ENCODE measurements at regions of chr21 and their contacts with region 1.

Region 1: DNA sequence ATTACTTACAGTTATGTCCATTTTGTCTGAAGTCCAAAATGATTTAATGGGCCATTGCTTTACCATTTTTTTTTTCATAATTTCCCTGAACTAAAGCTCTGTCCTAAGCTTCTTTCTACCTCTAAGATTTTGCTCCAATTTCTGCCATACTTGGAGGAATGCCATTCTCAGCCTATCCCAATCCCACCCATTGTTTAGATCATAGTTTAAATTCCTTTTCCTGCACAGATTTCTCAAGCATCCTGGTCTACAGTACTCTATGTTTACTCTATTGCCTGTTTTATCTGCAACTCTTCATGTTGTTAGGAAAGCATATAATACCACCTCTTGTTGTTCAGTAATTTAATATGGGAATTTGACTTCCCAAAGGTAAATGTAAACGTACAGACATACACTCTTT is 30.8 kb downstream of the ADAMTS1 start:
- DNase-seq: no peak
- H3K4me3 ChIP-seq: no peak overlapping the region
- H3K27ac ChIP-seq: no peak overlapping the region
- H3K4me1 ChIP-seq: no peaks in the 10 kb centered on the region
- H3K27me3 ChIP-seq: no peaks in the 10 kb centered on the region
- CTCF ChIP-seq: no peak
- EP300 ChIP-seq: no peak
- RAD21 ChIP-seq: no peak

Region 2: DNA sequence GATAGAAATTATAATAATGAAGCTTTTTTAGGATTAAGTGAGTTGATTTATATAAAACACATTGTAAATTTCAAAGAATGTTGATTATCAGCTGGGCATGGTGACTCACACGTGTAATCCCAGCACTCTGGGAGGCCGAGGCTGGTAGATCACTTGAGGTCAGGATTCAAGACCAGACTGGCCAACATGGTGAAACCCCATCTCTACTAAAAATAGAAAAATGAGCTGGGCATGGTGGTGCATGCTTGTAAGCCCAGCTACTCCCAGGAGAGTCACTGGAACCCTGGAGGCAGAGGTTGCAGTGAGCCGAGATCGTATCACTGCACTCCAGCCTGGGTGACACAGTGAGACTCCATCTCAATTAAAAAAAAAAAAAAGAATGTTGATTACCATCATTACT is 12.4 kb after region 1 on chr21:
- CTCF ChIA-PET with region 1: interaction called, 27 read pairs
- POLR2A ChIA-PET with region 1: no interaction called
- DNase-seq: no peak
- H3K4me3 ChIP-seq: no peak overlapping the region; a peak in 1 of 4 replicates
- H3K27ac ChIP-seq: no peak overlapping the region
- H3K4me1 ChIP-seq: no peaks in the 10 kb centered on the region
- H3K27me3 ChIP-seq: no peaks in the 10 kb centered on the region
- CTCF ChIP-seq: no peak
- EP300 ChIP-seq: no peak
- RAD21 ChIP-seq: no peak

Region 3: GRCh38 chr21:26834181-26834945 is 20.0 kb after region 1 on chr21:
- CTCF ChIA-PET with region 1: interaction called, 14 read pairs
- POLR2A ChIA-PET with region 1: no interaction called
- DNase-seq: no peak
- H3K4me3 ChIP-seq: no peak overlapping the region
- H3K27ac ChIP-seq: peak overlapping the region in 1 of 2 experiments; percentile 52; a peak in 1 of 4 replicates
- H3K4me1 ChIP-seq: peaks cover 0 to 11% of the 10 kb centered on the region in 2 experiments; a peak in 3 of 4 replicates
- H3K27me3 ChIP-seq: no peaks in the 10 kb centered on the region
- CTCF ChIP-seq: peak; percentile 56
- EP300 ChIP-seq: no peak
- RAD21 ChIP-seq: no peak

Region 4: GRCh38 chr21:27001526-27001925 is 187.2 kb after region 1 on chr21:
- CTCF ChIA-PET with region 1: no interaction called
- POLR2A ChIA-PET with region 1: no interaction called
- DNase-seq: no peak
- H3K4me3 ChIP-seq: no peak overlapping the region
- H3K27ac ChIP-seq: no peak overlapping the region
- H3K4me1 ChIP-seq: no peaks in the 10 kb centered on the region
- H3K27me3 ChIP-seq: no peaks in the 10 kb centered on the region
- CTCF ChIP-seq: no peak
- EP300 ChIP-seq: no peak
- RAD21 ChIP-seq: no peak

Measured in SK-N-SH (cell line).